ENCODE measurements at regions of chr2 and their contacts with region 1.

Region 1: GRCh38 chr2:168246483-168247340 is 683 bp downstream of the STK39 start:
- DNase-seq: peak; percentile 85
- ATAC-seq: peak; percentile 47
- H3K4me3 Mint-ChIP-seq: peak overlapping the region; percentile 94
- H3K27ac Mint-ChIP-seq: peak overlapping the region; percentile 96
- H3K4me1 Mint-ChIP-seq: peaks cover 28% of the 10 kb centered on the region
- H3K27me3 Mint-ChIP-seq: no peaks in the 10 kb centered on the region

Region 2: DNA sequence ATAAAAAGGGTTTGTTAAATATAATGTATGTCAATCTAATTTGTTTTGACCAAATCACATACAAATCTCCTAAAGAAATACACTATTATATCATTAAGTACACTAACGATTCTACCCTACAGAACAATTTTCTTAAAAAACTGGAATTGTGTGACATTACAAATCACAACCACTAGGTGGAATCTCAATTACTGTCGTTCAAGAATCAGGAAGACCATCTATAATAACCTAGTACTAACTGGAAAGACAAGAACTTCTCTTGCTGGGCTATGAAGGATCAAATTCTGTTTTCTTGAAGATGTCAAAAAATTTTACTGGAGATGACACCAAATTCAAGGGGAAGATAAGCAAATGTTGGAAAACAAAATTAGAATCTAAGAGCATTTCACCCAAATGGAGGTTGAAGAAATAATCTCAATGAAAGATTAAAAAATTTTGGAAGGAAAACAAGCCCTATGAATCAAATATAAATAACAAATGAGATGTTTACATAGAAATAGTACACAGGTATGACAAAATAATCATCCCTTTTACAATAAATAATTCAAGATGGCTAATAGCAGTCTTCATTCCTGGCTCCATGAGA is 110.2 kb before region 1 on chr2:
- CTCF ChIA-PET with region 1: interaction called, 3 read pairs
- POLR2A ChIA-PET with region 1: no interaction called
- intact Hi-C with region 1: loop called (anchors 1 to 2 kb)
- DNase-seq: no peak
- ATAC-seq: peak; percentile 26
- H3K4me3 Mint-ChIP-seq: no peak overlapping the region
- H3K27ac Mint-ChIP-seq: no peak overlapping the region
- H3K4me1 Mint-ChIP-seq: peaks cover 20% of the 10 kb centered on the region
- H3K27me3 Mint-ChIP-seq: no peaks in the 10 kb centered on the region

Region 3: DNA sequence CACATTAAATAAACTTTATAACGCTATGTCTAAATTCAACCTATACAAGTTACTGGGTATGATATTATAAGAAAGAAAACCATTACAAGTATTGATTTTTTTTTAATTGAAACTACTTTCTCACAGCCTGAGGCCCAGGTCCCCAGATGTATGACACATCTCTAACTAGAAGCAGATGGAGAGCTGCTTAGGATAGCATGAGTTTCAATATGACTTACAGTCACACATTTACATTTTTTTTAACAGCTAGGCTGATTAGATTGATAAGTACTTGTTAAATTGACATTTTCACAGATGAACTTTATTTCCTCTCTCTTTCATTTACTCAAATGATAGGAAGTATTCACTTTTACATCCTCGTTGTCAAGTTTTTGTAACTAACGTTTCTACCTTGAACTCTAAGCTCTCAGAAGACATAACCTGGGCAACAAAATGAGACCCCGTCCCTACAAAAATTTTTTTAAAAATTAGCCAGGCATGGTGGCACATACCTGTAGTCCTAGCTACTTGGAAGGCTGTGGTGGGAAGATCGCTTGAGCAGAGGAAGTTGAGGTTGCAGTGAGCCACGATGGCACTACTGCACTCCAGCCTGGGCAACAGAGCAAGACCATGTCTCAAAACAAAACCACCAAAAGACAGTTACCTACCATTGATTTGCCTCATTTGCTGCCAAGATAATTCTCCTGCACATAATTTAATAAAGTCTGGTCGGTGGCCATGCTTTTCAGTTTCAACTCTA is 51.8 kb before region 1 on chr2:
- CTCF ChIA-PET with region 1: no interaction called
- POLR2A ChIA-PET with region 1: interaction called, 4 read pairs
- intact Hi-C with region 1: loop called (anchors 1 to 2 kb)
- DNase-seq: peak; percentile 62
- ATAC-seq: peak; percentile 85
- H3K4me3 Mint-ChIP-seq: peak overlapping the region; percentile 54
- H3K27ac Mint-ChIP-seq: peak overlapping the region; percentile 95
- H3K4me1 Mint-ChIP-seq: peaks cover 80% of the 10 kb centered on the region
- H3K27me3 Mint-ChIP-seq: no peaks in the 10 kb centered on the region

Region 4: DNA sequence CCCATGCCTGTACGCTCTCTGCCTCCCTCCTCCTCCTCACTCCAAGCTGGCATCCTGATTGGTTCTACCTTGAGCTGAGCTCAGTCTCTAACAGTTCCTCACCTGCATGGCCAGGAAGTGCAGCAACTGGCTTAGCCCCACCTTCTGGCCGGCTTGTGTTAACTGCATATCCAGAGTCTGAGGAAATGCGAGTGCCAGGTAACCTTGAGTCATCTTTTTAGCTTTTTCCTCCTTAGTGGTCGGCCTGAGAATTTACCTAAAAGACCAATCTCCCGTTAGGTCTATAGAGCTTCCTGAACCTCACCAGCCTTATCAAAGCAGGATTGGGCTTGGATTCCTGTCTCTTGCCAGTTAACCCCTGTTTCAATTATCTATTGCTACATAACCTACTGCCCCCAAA is 90.2 kb after region 1 on chr2:
- CTCF ChIA-PET with region 1: interaction called, 3 read pairs
- POLR2A ChIA-PET with region 1: no interaction called
- intact Hi-C with region 1: loop called in 1 of 2 experiments (anchors 5 kb)
- DNase-seq: peak; percentile 77
- ATAC-seq: peak; percentile 98
- H3K4me3 Mint-ChIP-seq: no peak overlapping the region
- H3K27ac Mint-ChIP-seq: no peak overlapping the region
- H3K4me1 Mint-ChIP-seq: peaks cover 7% of the 10 kb centered on the region
- H3K27me3 Mint-ChIP-seq: peaks cover 2% of the 10 kb centered on the region

Region 5: DNA sequence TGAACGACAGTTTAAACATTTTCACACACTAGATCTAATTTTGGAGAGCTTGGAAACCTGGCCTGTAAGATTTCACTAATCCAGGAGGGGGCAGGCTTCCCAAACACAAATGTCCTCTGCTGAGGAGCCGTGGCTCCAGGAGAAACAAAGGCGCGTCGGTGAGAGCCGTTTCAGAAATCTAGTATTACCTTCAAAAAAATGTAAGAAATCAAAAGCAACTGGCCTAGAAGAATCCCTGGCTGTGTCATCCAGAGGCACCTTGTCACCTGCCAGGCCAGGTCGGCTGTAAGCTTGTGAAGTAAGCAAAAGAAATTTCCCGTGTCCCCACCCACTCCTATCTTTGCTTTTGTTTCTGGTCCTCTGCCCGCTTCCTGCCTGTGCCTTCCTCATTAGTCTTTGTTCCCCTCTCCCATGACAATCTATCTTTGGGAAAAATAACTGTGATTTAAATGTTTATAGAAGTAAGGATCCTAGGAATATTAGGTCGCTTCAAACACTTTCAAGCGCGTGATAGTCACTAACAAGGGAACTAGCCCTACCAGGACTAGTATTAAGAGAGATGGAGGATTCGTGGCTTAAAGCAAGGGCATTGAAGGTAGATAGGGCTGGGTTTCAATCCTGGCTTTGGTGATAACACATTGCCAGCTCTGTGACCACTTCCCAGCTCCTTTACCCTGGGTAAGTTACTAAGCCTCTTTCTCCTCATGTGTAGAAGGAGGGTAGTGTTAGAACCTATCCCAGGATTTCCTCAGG is 100.2 kb after region 1 on chr2:
- CTCF ChIA-PET with region 1: no interaction called
- POLR2A ChIA-PET with region 1: no interaction called
- intact Hi-C with region 1: no loop called
- DNase-seq: peak; percentile 80
- ATAC-seq: peak; percentile 85
- H3K4me3 Mint-ChIP-seq: peak overlapping the region; percentile 67
- H3K27ac Mint-ChIP-seq: peak overlapping the region; percentile 20
- H3K4me1 Mint-ChIP-seq: peaks cover 5% of the 10 kb centered on the region
- H3K27me3 Mint-ChIP-seq: no peaks in the 10 kb centered on the region

Region 6: GRCh38 chr2:169363560-169364150 is 1116.9 kb after region 1 on chr2:
- CTCF ChIA-PET with region 1: no interaction called
- POLR2A ChIA-PET with region 1: no interaction called
- intact Hi-C with region 1: loop called in 1 of 2 experiments (anchors 10 kb)
- DNase-seq: peak; percentile 80
- ATAC-seq: peak; percentile 73
- H3K4me3 Mint-ChIP-seq: peak overlapping the region; percentile 86
- H3K27ac Mint-ChIP-seq: peak overlapping the region; percentile 49
- H3K4me1 Mint-ChIP-seq: peaks cover 29% of the 10 kb centered on the region
- H3K27me3 Mint-ChIP-seq: peaks cover 38% of the 10 kb centered on the region

Measured in activated CD4-positive, alpha-beta T cell treated with anti-CD3 and anti-CD28 coated beads for 36 hours (primary cell).